Endothelial cell of umbilical vein (primary cell): ENCODE measurements at regions of chr12 and their contacts with region 1.

Region 1: GRCh38 chr12:761256-761655 is 8.9 kb downstream of the WNK1 start:
- DNase-seq: no peak
- H3K4me3 ChIP-seq: no peak overlapping the region
- H3K27ac ChIP-seq: no peak overlapping the region
- H3K4me1 ChIP-seq: peaks cover 8% of the 10 kb centered on the region
- H3K27me3 ChIP-seq: no peaks in the 10 kb centered on the region
- CTCF ChIP-seq: no peak
- POLR2A ChIP-seq: no peak

Region 2: DNA sequence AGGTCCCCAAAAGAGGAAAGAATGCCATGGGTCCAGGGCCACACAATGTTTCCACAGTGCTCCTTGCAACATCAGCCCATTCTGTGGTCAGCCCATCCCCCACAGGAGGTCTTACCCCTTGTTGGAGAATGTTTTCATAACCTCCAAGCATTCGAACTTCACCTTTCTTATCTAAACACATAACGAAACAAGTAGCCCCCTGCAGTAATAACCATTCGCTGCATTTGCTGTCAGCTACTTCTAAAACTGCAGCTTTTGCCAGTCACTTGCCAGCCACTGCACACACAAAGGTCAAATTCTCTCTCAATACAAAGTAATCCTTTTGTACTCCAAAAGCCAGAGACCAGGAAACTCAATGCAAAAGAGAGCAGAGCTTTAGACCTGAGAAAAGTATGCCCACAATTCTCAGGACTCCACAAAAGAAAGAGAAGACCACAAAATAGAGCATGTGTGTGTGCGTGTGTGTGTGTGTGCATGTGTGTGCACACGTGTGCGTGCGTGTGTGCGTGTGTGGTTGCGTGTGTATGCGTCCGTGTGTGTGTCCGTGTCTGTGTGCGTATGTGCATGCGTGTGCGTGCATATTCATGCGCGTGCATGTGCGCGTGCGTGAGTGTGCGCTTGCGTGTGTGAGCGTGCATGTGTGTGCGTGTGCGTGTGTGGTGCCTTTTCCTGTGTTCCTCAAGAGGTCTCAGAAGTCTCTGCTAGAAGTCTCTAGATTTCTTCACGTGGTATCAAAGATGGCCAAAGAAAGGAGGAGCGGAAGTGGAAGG is 66.3 kb before region 1 on chr12:
- CTCF ChIA-PET with region 1: no interaction called
- POLR2A ChIA-PET with region 1: no interaction called
- dilution Hi-C with region 1: no loop called
- intact Hi-C with region 1: no loop called
- DNase-seq: no peak
- H3K4me3 ChIP-seq: no peak overlapping the region
- H3K27ac ChIP-seq: no peak overlapping the region
- H3K4me1 ChIP-seq: no peaks in the 10 kb centered on the region
- H3K27me3 ChIP-seq: no peaks in the 10 kb centered on the region
- CTCF ChIP-seq: no peak
- POLR2A ChIP-seq: no peak

Region 3: DNA sequence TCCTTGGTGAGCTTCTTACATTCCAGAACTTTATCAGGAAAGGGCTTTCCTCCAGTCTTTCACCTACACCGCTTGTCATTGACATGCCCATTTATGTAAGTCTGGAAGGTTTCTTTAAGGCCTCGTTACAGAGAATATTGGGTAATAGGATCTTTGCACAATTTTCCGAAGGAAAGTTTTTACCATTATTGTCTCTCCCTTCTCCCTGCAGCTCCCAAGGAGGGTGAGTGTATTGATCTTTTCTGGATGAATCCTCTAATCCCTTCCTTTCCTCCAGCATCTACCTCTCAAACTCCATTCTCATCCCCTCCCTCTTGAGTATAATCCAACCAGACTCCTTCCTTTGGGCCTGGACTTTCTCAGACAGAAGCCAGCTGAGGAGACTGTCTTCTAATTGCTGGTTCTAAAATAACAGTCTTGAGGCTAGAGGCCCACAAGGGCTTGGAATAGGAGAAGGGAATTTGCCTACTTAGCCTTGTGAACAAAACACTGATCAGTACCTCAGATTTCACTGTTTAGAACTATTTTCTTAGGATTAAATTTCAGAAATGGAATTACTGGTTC is 12.9 kb after region 1 on chr12:
- CTCF ChIA-PET with region 1: interaction called, 16 read pairs
- POLR2A ChIA-PET with region 1: no interaction called
- dilution Hi-C with region 1: no loop called
- intact Hi-C with region 1: no loop called
- DNase-seq: no peak
- H3K4me3 ChIP-seq: no peak overlapping the region
- H3K27ac ChIP-seq: no peak overlapping the region
- H3K4me1 ChIP-seq: peaks cover 5% of the 10 kb centered on the region
- H3K27me3 ChIP-seq: no peaks in the 10 kb centered on the region
- CTCF ChIP-seq: no peak
- POLR2A ChIP-seq: no peak

Region 4: DNA sequence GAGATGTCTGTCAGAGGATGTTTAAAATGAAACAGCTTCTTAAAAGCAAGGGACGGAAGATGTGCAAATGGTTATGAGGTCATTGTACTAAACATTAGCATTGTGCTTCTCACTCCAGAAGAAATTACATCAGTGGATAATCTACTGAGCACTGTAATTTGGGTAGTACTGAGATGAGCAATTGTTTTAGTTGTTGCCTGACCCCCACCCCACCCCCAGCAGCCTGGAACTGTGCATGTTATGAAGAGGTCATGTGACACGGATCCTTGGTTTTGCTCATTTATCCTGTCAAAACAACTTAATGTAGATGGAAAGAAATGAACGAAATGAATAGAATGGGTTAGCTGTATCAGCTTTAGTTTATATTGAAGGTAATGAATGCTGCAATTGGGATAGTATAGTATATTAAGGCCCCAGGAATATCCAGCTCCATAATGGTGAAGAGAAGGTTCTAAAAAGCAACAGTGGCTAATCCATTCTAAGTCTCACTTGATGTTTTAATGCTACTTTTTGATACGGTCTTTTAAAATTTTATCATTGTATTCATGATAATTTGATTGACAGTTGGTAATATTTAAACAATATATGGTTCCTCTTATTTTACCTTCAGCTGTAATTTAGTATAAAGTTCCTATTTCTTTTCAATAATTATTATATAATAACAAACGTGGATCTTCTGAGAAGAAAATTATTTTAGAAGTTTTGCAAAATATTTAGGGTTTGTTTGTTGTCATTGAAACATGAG is 49.6 kb after region 1 on chr12:
- CTCF ChIA-PET with region 1: interaction called, 12 read pairs
- POLR2A ChIA-PET with region 1: no interaction called
- dilution Hi-C with region 1: no loop called
- intact Hi-C with region 1: no loop called
- DNase-seq: no peak
- H3K4me3 ChIP-seq: no peak overlapping the region
- H3K27ac ChIP-seq: no peak overlapping the region
- H3K4me1 ChIP-seq: peaks cover 13% of the 10 kb centered on the region
- H3K27me3 ChIP-seq: no peaks in the 10 kb centered on the region
- CTCF ChIP-seq: no peak
- POLR2A ChIP-seq: no peak

Region 5: DNA sequence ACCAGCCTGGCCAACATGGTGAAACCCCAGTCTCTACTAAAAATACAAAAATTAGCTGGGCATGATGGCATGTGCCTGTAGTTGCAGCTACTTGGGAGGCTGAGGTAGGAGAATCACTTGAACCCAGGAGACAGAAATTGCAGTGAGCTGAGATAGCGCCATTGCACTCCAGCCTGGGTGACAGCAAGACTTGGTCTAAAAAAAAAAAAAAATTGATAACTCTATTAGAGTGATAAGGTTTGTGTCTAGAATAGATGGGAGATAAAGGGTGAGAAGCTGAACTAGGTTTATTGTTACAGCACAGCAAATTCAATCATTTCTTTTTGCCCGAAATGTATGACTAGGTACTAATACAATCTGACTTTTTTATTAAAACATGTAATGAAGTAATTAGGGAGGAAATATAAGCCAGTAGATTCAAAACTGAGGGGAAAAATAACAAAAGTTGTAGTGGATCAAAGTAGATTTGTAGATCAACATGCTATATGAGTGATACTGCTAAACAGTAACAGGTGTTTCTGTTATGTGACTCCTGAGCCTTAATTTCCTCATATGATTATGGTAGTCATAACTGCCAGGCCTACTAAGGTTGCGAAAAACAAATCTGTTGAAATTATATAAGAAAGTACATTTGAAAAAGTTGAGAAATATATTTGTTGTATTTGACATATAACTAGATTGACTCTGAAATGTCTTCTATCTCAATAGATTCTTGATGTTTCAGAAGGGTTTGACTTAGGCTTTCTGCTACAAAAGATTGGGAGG is 74.7 kb after region 1 on chr12:
- CTCF ChIA-PET with region 1: no interaction called
- POLR2A ChIA-PET with region 1: no interaction called
- dilution Hi-C with region 1: no loop called
- intact Hi-C with region 1: no loop called
- DNase-seq: no peak
- H3K4me3 ChIP-seq: no peak overlapping the region
- H3K27ac ChIP-seq: no peak overlapping the region
- H3K4me1 ChIP-seq: peaks cover 3% of the 10 kb centered on the region
- H3K27me3 ChIP-seq: no peaks in the 10 kb centered on the region
- CTCF ChIP-seq: no peak
- POLR2A ChIP-seq: no peak